ENCODE measurements at regions of chr16 and their contacts with region 1.

Region 1: DNA sequence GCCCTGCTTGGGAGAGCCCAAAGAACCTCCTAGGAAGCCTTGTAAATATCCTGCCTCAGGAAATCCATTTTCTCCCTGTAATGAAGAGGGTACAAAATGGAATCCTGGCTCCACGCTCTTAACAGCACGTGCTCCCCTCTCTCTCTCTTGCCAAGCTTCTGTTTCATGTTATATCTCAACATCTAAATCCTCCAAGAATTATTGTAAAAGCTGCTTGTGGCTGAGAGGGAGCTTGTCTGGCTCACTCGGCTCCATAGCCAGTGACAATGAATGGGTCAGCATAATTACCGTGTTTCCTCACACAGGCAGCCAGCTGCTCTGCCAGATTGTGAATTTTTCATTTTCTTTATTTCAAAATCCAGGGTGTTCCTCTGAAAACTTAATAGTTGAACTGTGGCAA is 317.8 kb downstream of the RBFOX1 start:
- DNase-seq: no peak
- ATAC-seq: no peak
- H3K4me3 ChIP-seq: no peak overlapping the region
- H3K27ac ChIP-seq: no peak overlapping the region
- H3K4me1 ChIP-seq: no peaks in the 10 kb centered on the region
- H3K27me3 ChIP-seq: no peaks in the 10 kb centered on the region
- CTCF ChIP-seq: no peak

Region 2: GRCh38 chr16:6611535-6611934 is 1038.9 kb before region 1 on chr16:
- intact Hi-C with region 1: loop called in 1 of 2 experiments (anchors 10 kb)
- DNase-seq: no peak
- ATAC-seq: no peak
- H3K4me3 ChIP-seq: no peak overlapping the region
- H3K27ac ChIP-seq: no peak overlapping the region
- H3K4me1 ChIP-seq: no peaks in the 10 kb centered on the region
- H3K27me3 ChIP-seq: no peaks in the 10 kb centered on the region
- CTCF ChIP-seq: no peak

Measured in psoas muscle (tissue), 8 donors.